ENCODE measurements at regions of chr7 and their contacts with region 1.

Region 1: GRCh38 chr7:51162724-51163329 is 153.8 kb downstream of the COBL start:
- DNase-seq: peak; percentile 64
- H3K4me3 ChIP-seq: no peak overlapping the region; a peak in 1 of 4 replicates
- H3K27ac ChIP-seq: no peak overlapping the region
- H3K4me1 ChIP-seq: no peaks in the 10 kb centered on the region
- H3K27me3 ChIP-seq: peaks cover 12% of the 10 kb centered on the region; the same call in 1 of the 2 replicates
- CTCF ChIP-seq: peak; percentile 99
- EP300 ChIP-seq: no peak
- RAD21 ChIP-seq: peak; percentile 83

Region 2: GRCh38 chr7:50206453-50207250 is 956.2 kb before region 1 on chr7:
- CTCF ChIA-PET with region 1: interaction called, 10 read pairs
- POLR2A ChIA-PET with region 1: no interaction called
- DNase-seq: no peak
- H3K4me3 ChIP-seq: no peak overlapping the region
- H3K27ac ChIP-seq: no peak overlapping the region
- H3K4me1 ChIP-seq: no peaks in the 10 kb centered on the region
- H3K27me3 ChIP-seq: no peaks in the 10 kb centered on the region
- CTCF ChIP-seq: no peak
- EP300 ChIP-seq: no peak
- RAD21 ChIP-seq: no peak

Region 3: GRCh38 chr7:50812841-50813475 is 349.9 kb before region 1 on chr7:
- CTCF ChIA-PET with region 1: no interaction called
- POLR2A ChIA-PET with region 1: no interaction called
- DNase-seq: no peak
- H3K4me3 ChIP-seq: no peak overlapping the region
- H3K27ac ChIP-seq: no peak overlapping the region
- H3K4me1 ChIP-seq: 0 out of 4 replicates have a peak, but pooled peaks cover 0 to 8% of the 10 kb centered on the region in 2 experiments
- H3K27me3 ChIP-seq: no peaks in the 10 kb centered on the region
- CTCF ChIP-seq: no peak
- EP300 ChIP-seq: no peak
- RAD21 ChIP-seq: no peak

Region 4: DNA sequence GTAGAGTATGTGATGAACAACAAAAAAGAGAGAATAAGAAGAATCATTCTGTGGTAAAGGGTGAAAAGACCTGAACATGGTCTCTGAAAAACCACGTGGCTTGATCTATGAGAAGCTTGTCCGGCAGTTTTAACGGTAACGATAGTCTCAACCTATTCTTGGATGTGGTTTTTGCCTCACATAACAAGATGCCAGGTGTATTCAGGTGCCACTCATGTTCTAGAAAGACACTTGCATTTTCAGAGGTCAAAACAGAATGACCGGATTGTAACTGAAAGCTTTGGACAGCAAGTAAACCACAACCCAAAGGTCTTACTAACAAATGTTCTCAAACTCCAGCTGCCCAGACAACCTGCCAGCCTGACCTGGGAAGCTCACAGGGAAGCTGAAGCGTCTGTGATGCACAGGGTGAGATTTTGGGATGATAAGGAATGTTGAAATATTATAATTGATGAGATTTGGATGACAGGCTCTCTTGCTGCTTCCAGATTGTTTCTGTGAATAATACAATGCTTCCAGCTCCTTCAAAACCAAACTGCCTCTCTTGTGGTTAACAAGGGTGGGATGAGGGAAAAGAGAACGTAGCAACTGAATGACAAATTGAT is 242.7 kb before region 1 on chr7:
- CTCF ChIA-PET with region 1: no interaction called
- POLR2A ChIA-PET with region 1: no interaction called
- DNase-seq: no peak
- H3K4me3 ChIP-seq: no peak overlapping the region
- H3K27ac ChIP-seq: no peak overlapping the region
- H3K4me1 ChIP-seq: no peaks in the 10 kb centered on the region
- H3K27me3 ChIP-seq: peaks cover 83% of the 10 kb centered on the region
- CTCF ChIP-seq: no peak
- EP300 ChIP-seq: no peak
- RAD21 ChIP-seq: no peak

Region 5: DNA sequence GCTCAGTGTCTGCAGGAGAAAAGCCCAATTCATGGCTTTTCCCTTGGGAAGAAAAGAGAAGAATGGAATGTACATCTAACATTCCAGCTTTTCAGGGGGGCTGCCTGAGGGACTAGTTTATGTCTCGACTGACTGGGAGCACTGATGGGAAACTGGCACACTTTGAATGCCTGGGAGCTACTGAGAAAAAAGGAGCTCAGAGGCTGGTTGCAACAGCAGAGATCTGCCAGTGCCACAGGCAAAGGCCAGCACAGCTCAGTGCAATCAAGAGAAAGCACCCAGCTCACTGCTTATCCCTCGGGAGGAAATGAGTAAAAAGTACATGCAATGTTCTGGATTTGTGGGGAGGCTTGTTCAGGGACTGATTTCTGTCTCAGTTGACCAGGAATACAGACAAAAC is 72.4 kb before region 1 on chr7:
- CTCF ChIA-PET with region 1: interaction called, 23 read pairs
- POLR2A ChIA-PET with region 1: no interaction called
- DNase-seq: no peak
- H3K4me3 ChIP-seq: no peak overlapping the region
- H3K27ac ChIP-seq: no peak overlapping the region
- H3K4me1 ChIP-seq: no peaks in the 10 kb centered on the region
- H3K27me3 ChIP-seq: peaks cover 32% of the 10 kb centered on the region
- CTCF ChIP-seq: no peak
- EP300 ChIP-seq: no peak
- RAD21 ChIP-seq: no peak

Region 6: DNA sequence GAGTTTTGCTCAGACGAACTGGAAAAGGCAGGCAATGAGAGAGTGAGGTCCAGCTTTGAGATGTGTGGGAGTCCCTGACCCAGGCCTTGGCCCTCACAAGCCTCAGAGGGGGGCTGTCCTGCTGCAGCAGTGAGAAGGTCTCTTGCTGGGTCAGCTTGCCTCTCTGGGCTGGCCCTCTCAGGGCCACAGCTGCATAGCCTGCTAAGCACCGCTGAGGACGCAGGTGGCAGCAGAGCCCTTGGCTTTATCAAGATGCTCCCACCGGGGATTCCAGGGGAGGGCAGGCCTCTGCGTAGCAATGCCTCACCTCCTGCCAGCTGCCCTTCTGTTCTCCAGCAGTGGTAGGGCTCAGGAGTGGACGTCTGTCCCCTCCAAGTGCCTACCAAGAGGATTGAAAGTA is 25.1 kb after region 1 on chr7:
- CTCF ChIA-PET with region 1: interaction called, 23 read pairs
- POLR2A ChIA-PET with region 1: no interaction called
- DNase-seq: peak; percentile 34
- H3K4me3 ChIP-seq: no peak overlapping the region
- H3K27ac ChIP-seq: no peak overlapping the region
- H3K4me1 ChIP-seq: no peaks in the 10 kb centered on the region
- H3K27me3 ChIP-seq: no peaks in the 10 kb centered on the region
- CTCF ChIP-seq: no peak
- EP300 ChIP-seq: no peak
- RAD21 ChIP-seq: peak; percentile 34; the same call in 1 of the 2 replicates

Region 7: DNA sequence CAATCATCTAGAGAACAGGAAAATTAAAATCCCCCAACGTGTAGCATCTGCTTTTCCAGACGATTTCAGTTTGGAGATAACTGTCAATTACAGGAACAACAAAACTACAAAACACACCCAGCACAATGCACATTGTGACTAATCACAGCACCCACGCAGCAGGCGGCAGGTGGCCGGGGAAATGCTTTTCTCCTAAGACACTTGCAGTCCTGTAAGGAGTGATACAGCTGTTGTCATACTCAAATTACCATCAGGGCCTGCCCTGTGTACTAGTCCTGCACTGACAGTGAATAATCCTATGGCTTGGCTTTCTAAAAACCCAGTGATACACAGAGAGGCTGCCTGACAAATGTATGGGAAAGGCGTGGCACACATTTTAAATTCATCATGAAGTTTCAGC is 116.0 kb after region 1 on chr7:
- CTCF ChIA-PET with region 1: no interaction called
- POLR2A ChIA-PET with region 1: no interaction called
- DNase-seq: no peak
- H3K4me3 ChIP-seq: no peak overlapping the region
- H3K27ac ChIP-seq: no peak overlapping the region
- H3K4me1 ChIP-seq: no peaks in the 10 kb centered on the region
- H3K27me3 ChIP-seq: no peaks in the 10 kb centered on the region
- CTCF ChIP-seq: no peak
- EP300 ChIP-seq: no peak
- RAD21 ChIP-seq: no peak

Region 8: GRCh38 chr7:51356849-51357516 is 194.2 kb after region 1 on chr7:
- CTCF ChIA-PET with region 1: interaction called, 16 read pairs
- POLR2A ChIA-PET with region 1: no interaction called
- DNase-seq: no peak
- H3K4me3 ChIP-seq: no peak overlapping the region
- H3K27ac ChIP-seq: no peak overlapping the region
- H3K4me1 ChIP-seq: no peaks in the 10 kb centered on the region
- H3K27me3 ChIP-seq: no peaks in the 10 kb centered on the region
- CTCF ChIP-seq: no peak
- EP300 ChIP-seq: no peak
- RAD21 ChIP-seq: no peak

Region 9: GRCh38 chr7:51430480-51431086 is 267.8 kb after region 1 on chr7:
- CTCF ChIA-PET with region 1: interaction called, 16 read pairs
- POLR2A ChIA-PET with region 1: no interaction called
- DNase-seq: peak; percentile 79
- H3K4me3 ChIP-seq: no peak overlapping the region
- H3K27ac ChIP-seq: no peak overlapping the region
- H3K4me1 ChIP-seq: no peaks in the 10 kb centered on the region
- H3K27me3 ChIP-seq: no peaks in the 10 kb centered on the region
- CTCF ChIP-seq: peak; percentile 77
- EP300 ChIP-seq: no peak
- RAD21 ChIP-seq: peak; percentile 96

Measured in SK-N-SH (cell line).